Activated B cell treated with CpG ODN at 0.5 μM for 24 hours (primary cell): ENCODE measurements at regions of chr11 and their contacts with region 1.

Region 1: GRCh38 chr11:64652586-64653387 is 61.8 kb downstream of the SLC22A12 start:
- DNase-seq: peak; percentile 59
- ATAC-seq: peak; percentile 60
- H3K4me3 Mint-ChIP-seq: no peak overlapping the region
- H3K27ac Mint-ChIP-seq: no peak overlapping the region
- H3K4me1 Mint-ChIP-seq: peaks cover 27% of the 10 kb centered on the region
- H3K27me3 Mint-ChIP-seq: peaks cover 5% of the 10 kb centered on the region
- CTCF ChIP-seq: no peak

Region 2: DNA sequence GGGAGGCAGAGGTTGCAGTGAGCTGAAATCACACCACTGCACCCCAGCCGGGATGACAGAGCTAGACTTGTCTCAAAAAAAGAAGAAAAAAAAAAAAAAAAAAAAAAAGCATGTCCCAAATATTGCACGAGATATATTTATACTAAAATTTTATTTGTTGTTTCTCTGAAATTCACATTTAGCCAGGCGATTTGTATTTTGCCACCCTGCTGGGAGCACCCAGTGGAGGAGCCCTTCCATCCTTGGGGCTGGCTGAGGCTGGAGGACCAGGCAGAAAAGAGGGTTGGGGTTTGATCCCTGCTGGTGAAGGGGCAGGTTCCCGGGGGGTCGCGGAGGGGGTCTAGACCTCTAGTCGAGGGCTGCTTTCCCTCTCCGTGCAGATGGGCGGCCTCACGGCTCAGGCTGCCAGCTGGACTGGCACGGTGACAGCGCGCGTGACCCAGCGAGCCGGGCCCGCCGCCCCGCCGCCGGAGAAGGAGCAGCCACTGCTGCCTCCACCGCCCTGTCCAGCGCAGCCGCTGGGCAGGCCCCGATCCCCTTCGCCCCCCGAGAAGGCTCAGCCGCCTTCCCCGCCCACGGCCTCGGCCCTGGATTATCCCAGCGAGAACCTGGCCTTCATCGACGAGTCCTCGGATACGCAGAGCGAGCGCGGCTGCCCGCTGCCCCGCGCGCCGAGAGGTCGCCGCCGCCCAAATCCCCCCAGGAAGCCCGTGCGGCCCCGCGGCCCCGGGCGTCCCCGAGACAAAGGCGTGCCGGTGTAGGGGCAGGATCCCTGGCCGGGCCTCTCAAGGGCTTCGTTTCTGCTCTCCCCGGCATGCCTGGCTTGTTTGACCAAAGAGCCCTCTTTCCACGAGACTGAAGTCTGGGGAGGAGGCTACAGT is 353.6 kb before region 1 on chr11:
- CTCF ChIA-PET with region 1: no interaction called
- POLR2A ChIA-PET with region 1: interaction called, 13 read pairs
- intact Hi-C with region 1: loop called (anchors 1 kb)
- DNase-seq: peak; percentile 31
- ATAC-seq: no peak
- H3K4me3 Mint-ChIP-seq: peak overlapping the region; percentile 53
- H3K27ac Mint-ChIP-seq: no peak overlapping the region
- H3K4me1 Mint-ChIP-seq: peaks cover 26% of the 10 kb centered on the region
- H3K27me3 Mint-ChIP-seq: peaks cover 46% of the 10 kb centered on the region
- CTCF ChIP-seq: no peak

Region 3: DNA sequence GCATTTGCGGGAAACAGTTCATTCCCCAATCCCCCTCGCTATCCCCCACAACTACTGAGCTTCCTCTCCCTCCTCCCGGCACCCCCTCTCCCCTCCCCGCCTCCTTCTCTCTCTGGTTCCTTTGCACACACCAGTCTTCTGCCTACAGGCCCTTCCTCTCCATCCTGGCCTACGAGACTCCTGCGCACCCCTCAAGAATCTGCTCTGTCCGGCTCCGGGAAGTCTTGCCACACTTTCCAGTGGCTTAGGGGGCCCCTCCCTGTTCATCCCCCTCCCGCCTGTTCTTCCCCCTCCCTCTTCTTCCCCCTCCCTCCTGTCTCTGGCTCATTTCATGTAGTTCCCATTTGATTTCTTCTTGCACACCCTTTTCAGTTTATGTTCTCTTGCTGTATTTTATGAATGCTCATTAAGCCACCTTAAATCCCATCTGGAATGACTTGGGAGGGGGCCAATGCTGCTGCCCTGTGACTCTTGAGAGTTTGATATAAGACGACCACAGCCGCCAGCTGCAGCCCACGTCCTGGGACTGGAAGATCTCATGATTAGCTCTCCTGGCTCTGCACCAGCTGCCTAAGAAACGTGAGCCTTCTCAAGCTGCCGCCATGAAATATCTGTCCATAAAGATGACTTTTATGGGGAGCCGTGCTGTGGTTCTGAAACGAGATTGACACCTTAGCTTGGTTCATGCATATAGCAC is 242.9 kb before region 1 on chr11:
- CTCF ChIA-PET with region 1: no interaction called
- POLR2A ChIA-PET with region 1: no interaction called
- intact Hi-C with region 1: no loop called
- DNase-seq: no peak
- ATAC-seq: no peak
- H3K4me3 Mint-ChIP-seq: no peak overlapping the region
- H3K27ac Mint-ChIP-seq: no peak overlapping the region
- H3K4me1 Mint-ChIP-seq: peaks cover 1% of the 10 kb centered on the region
- H3K27me3 Mint-ChIP-seq: peaks cover 15% of the 10 kb centered on the region
- CTCF ChIP-seq: no peak

Region 4: GRCh38 chr11:64448599-64449556 is 203.9 kb before region 1 on chr11:
- CTCF ChIA-PET with region 1: interaction called, 39 read pairs
- POLR2A ChIA-PET with region 1: interaction called, 3 read pairs
- intact Hi-C with region 1: loop called (anchors 2 kb)
- DNase-seq: peak; percentile 71
- ATAC-seq: peak; percentile 59
- H3K4me3 Mint-ChIP-seq: peak overlapping the region; percentile 87
- H3K27ac Mint-ChIP-seq: peak overlapping the region; percentile 73
- H3K4me1 Mint-ChIP-seq: peaks cover 35% of the 10 kb centered on the region
- H3K27me3 Mint-ChIP-seq: peaks cover 2% of the 10 kb centered on the region
- CTCF ChIP-seq: no peak

Region 5: DNA sequence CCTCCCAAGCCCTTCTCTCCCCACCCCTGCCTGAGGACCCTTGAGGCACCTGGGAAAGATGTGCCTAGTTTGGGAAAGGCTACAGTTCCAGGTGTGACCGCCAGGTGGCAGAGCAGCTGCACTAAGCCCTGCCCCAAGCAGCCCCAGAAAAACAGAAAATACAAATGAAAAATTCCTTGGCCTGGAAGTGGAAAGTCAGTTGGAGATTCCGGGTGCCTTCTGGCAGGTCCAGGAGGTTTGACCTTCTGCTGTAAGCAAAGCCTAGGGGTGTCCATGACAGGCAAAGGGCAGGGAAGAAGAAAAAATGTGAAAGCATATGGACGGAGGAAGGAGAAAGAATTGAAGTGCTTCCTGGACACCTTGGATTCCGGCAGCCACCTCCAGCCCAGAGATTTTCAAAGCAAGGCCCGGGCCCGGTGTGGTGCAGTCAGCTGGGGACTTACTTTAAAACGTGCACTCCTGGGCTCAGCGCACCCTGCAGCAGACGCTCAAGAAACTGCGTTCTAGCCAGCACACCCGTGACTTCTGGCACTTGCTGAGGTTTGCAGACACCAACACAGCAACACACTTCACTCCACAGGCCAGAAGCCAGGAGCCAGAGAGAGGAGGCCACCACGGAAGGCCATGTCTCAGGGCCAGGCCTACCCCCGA is 99.1 kb before region 1 on chr11:
- CTCF ChIA-PET with region 1: no interaction called
- POLR2A ChIA-PET with region 1: no interaction called
- intact Hi-C with region 1: loop called (anchors 1 kb)
- DNase-seq: peak; percentile 62
- ATAC-seq: peak; percentile 68
- H3K4me3 Mint-ChIP-seq: no peak overlapping the region
- H3K27ac Mint-ChIP-seq: no peak overlapping the region
- H3K4me1 Mint-ChIP-seq: peaks cover 15% of the 10 kb centered on the region
- H3K27me3 Mint-ChIP-seq: peaks cover 4% of the 10 kb centered on the region
- CTCF ChIP-seq: peak; percentile 40

Region 6: DNA sequence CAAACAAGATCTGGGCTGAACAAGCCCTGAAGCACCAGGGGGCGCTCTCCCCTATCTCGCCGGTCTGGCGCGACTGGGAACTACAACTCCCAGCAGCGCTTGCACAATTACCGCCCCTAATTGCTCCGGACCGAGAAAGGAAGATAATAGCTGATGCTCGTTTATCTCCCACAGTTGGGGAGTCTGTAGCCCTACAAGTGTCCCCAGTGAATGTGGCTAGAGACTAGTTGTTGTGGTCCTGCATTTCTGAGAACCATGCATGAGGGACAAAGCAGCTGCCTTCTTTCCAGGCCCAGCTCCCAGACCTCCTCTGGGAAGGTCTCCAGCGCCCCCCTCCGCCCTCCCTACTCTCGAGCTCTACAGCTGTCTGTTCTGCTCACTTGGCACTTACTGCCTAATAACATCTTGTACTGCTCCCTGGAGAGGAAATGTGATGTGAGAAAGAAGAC is 35.8 kb after region 1 on chr11:
- CTCF ChIA-PET with region 1: interaction called, 20 read pairs
- POLR2A ChIA-PET with region 1: interaction called, 3 read pairs
- intact Hi-C with region 1: loop called (anchors 5 kb)
- DNase-seq: peak; percentile 91
- ATAC-seq: peak; percentile 95
- H3K4me3 Mint-ChIP-seq: peak overlapping the region; percentile 82
- H3K27ac Mint-ChIP-seq: peak overlapping the region; percentile 82
- H3K4me1 Mint-ChIP-seq: peaks cover 21% of the 10 kb centered on the region
- H3K27me3 Mint-ChIP-seq: peaks cover 15% of the 10 kb centered on the region
- CTCF ChIP-seq: peak; percentile 85